Esophagus squamous epithelium (tissue), 5 donors: ENCODE measurements at regions of chr9 and their contacts with region 1.

Region 1: GRCh38 chr9:7273391-7273974 is 515.7 kb downstream of the KDM4C start:
- DNase-seq: no peak
- H3K4me3 ChIP-seq: no peak overlapping the region
- H3K27ac ChIP-seq: no peak overlapping the region
- H3K4me1 ChIP-seq: no peaks in the 10 kb centered on the region
- H3K27me3 ChIP-seq: no peaks in the 10 kb centered on the region
- CTCF ChIP-seq: peak in 1 of 6 experiments; percentile 8
- POLR2A ChIP-seq: no peak

Region 2: GRCh38 chr9:7196467-7196866 is 77.0 kb before region 1 on chr9:
- intact Hi-C with region 1: no loop called
- DNase-seq: no peak
- H3K4me3 ChIP-seq: no peak overlapping the region
- H3K27ac ChIP-seq: no peak overlapping the region
- H3K4me1 ChIP-seq: no peaks in the 10 kb centered on the region
- H3K27me3 ChIP-seq: no peaks in the 10 kb centered on the region
- CTCF ChIP-seq: no peak
- POLR2A ChIP-seq: no peak

Region 3: GRCh38 chr9:7216004-7216831 is 57.3 kb before region 1 on chr9:
- intact Hi-C with region 1: loop called (anchors 10 kb)
- DNase-seq: no peak
- H3K4me3 ChIP-seq: no peak overlapping the region
- H3K27ac ChIP-seq: peak overlapping the region in 1 of 4 donors; percentile 33
- H3K4me1 ChIP-seq: no peaks in the 10 kb centered on the region
- H3K27me3 ChIP-seq: no peaks in the 10 kb centered on the region
- CTCF ChIP-seq: no peak
- POLR2A ChIP-seq: no peak